B cell (primary cell): ENCODE measurements at regions of chr1 and their contacts with region 1.

Region 1: DNA sequence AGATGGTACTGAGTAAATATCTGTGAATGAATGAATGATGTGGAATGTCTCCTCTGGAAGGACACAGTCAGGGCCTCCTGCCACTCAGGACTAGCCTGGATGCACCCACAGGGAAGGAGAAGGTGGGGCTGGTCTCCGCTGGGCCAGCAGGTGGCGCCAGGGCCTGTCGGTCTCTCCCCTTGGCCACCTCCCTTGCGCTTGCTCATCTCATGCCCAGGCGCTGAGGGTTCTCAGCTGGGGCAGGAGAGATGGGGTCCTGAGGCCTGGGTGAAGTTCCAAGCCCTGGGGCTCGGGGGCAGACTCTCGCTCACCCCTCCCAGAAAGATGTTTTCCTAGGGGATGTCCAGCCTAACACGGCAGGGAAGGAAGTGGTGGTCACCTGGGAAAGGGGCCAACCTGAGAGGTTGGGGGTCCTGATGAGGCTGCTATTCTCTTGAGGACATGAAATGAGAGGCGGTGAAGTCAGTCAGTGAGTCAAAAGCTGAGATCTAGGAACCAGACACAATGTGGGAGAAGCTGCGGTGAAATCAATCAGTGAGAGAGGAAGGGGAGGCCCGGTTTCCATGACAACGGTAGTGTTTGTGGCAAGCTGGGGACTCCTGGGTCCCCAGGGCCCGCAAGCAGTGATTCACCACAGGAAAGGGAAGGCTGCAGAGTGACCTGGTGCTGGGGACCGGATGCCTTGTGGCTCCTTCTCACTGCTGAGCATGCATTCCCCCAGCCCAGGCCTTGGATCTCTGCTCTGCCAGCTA is 14.6 kb upstream of the MEX3A start:
- DNase-seq: peak; percentile 97
- ATAC-seq: peak; percentile 87
- H3K4me3 ChIP-seq: peak overlapping the region in 3 of 5 experiments; percentile 3 to 47 (median 30)
- H3K4me3 Mint-ChIP-seq: peak overlapping the region; percentile 72
- H3K27ac ChIP-seq: peak overlapping the region; percentile 82 to 93
- H3K27ac Mint-ChIP-seq: peak overlapping the region; percentile 95
- H3K4me1 ChIP-seq: peaks cover 23 to 24% of the 10 kb centered on the region in 2 donors
- H3K4me1 Mint-ChIP-seq: peaks cover 31% of the 10 kb centered on the region
- H3K27me3 ChIP-seq: peaks cover 0 to 1% (median 0%) of the 10 kb centered on the region in 4 experiments
- H3K27me3 Mint-ChIP-seq: no peaks in the 10 kb centered on the region
- CTCF ChIP-seq: peak; percentile 95

Region 2: DNA sequence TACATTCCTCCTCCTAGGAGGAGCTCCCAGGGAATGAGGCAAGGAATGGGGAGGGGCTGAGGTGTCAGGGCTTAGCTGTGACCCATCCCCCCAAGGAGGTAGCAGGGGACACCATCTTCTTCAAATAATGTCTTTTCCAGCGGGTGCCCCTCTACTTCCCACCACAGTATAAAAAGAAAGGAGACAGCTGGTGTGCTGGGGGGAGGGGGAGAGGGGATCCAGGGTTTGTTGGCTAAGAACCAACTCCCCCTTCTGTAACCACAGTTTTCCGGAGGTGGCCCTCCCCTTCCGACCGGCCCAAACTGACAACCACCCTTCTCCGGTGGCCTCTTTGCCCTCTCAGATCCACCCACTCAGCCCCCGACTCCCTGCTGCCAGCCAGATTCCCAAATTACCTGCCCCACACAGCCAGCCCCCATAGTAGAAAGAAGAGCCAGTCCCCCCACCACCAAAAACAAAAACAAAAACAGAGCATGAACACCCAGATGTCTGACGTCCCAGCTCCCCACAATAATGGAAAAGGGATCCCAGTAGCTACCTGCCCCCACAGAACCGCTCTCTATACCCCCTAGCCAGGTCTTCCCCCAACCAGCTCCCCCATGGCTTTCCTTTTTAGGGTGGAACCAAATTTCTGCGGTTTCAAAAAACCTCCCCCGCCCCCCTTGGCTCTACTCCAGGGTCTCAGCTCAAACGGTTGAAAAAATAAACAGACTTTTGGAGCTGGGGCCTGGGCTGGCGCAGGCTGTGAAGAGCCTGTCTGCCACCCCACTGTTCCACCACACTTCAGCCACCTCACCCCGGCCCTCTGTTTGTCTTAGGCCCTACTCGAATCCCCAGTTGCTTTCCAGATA is 120.5 kb before region 1 on chr1:
- CTCF ChIA-PET with region 1: no interaction called
- POLR2A ChIA-PET with region 1: no interaction called
- intact Hi-C with region 1: no loop called
- DNase-seq: peak; percentile 42
- ATAC-seq: no peak
- H3K4me3 ChIP-seq: peak overlapping the region; percentile 71 to 93 (median 81)
- H3K4me3 Mint-ChIP-seq: peak overlapping the region; percentile 95
- H3K27ac ChIP-seq: peak overlapping the region; percentile 70 to 91
- H3K27ac Mint-ChIP-seq: peak overlapping the region; percentile 94
- H3K4me1 ChIP-seq: peaks cover 62 to 72% of the 10 kb centered on the region in 2 donors
- H3K4me1 Mint-ChIP-seq: peaks cover 80% of the 10 kb centered on the region
- H3K27me3 ChIP-seq: no peaks in the 10 kb centered on the region
- H3K27me3 Mint-ChIP-seq: no peaks in the 10 kb centered on the region
- CTCF ChIP-seq: no peak

Region 3: GRCh38 chr1:156082309-156083091 is 14.3 kb before region 1 on chr1 and contains the start of gene MEX3A:
- CTCF ChIA-PET with region 1: interaction called, 12 read pairs
- POLR2A ChIA-PET with region 1: interaction called, 16 read pairs
- intact Hi-C with region 1: no loop called
- DNase-seq: peak; percentile 74
- ATAC-seq: peak; percentile 85
- H3K4me3 ChIP-seq: peak within 1 kb of the TSS; percentile 44 to 87 (median 81)
- H3K4me3 Mint-ChIP-seq: peak within 1 kb of the TSS; percentile 91
- H3K27ac ChIP-seq: peak within 1 kb of the TSS in 1 of 2 donors; percentile 26
- H3K27ac Mint-ChIP-seq: peak within 1 kb of the TSS; percentile 63
- H3K4me1 ChIP-seq: peaks cover 11 to 18% of the 10 kb centered on the region in 2 donors
- H3K4me1 Mint-ChIP-seq: peaks cover 22% of the 10 kb centered on the region
- H3K27me3 ChIP-seq: peaks cover 0 to 49% (median 21%) of the 10 kb centered on the region in 4 experiments
- H3K27me3 Mint-ChIP-seq: peaks cover 12% of the 10 kb centered on the region
- CTCF ChIP-seq: no peak
- total RNA-seq, gene MEX3A: 0.73 and 1.1 TPM in 2 replicates

Region 4: GRCh38 chr1:156114101-156114916 is 17.5 kb after region 1 on chr1 and contains the start of gene LMNA:
- CTCF ChIA-PET with region 1: interaction called, 970 read pairs
- POLR2A ChIA-PET with region 1: interaction called, 29 read pairs
- intact Hi-C with region 1: loop called (anchors 1 kb)
- DNase-seq: peak; percentile 80
- ATAC-seq: peak; percentile 79
- H3K4me3 ChIP-seq: peak within 1 kb of the TSS in 4 of 5 experiments; percentile 45 to 76 (median 64)
- H3K4me3 Mint-ChIP-seq: peak within 1 kb of the TSS; percentile 90
- H3K27ac ChIP-seq: peak within 1 kb of the TSS in 1 of 2 donors; percentile 64
- H3K27ac Mint-ChIP-seq: peak within 1 kb of the TSS; percentile 77
- H3K4me1 ChIP-seq: peaks cover 22 to 24% of the 10 kb centered on the region in 2 donors
- H3K4me1 Mint-ChIP-seq: peaks cover 30% of the 10 kb centered on the region
- H3K27me3 ChIP-seq: peaks cover 0 to 54% (median 12%) of the 10 kb centered on the region in 4 experiments
- H3K27me3 Mint-ChIP-seq: peaks cover 34% of the 10 kb centered on the region
- CTCF ChIP-seq: no peak
- total RNA-seq, gene LMNA: 28.7 and 32.3 TPM in 2 replicates

Region 5: GRCh38 chr1:156129706-156130581 is 33.1 kb after region 1 on chr1:
- CTCF ChIA-PET with region 1: interaction called, 970 read pairs
- POLR2A ChIA-PET with region 1: interaction called, 23 read pairs
- intact Hi-C with region 1: loop called (anchors 1 kb)
- DNase-seq: peak; percentile 84
- ATAC-seq: peak; percentile 69
- H3K4me3 ChIP-seq: no peak overlapping the region
- H3K4me3 Mint-ChIP-seq: no peak overlapping the region
- H3K27ac ChIP-seq: no peak overlapping the region
- H3K27ac Mint-ChIP-seq: peak overlapping the region; percentile 26
- H3K4me1 ChIP-seq: peaks cover 14 to 21% of the 10 kb centered on the region in 2 donors
- H3K4me1 Mint-ChIP-seq: peaks cover 28% of the 10 kb centered on the region
- H3K27me3 ChIP-seq: peaks cover 0 to 4% (median 1%) of the 10 kb centered on the region in 4 experiments
- H3K27me3 Mint-ChIP-seq: peaks cover 2% of the 10 kb centered on the region
- CTCF ChIP-seq: peak; percentile 95

Region 6: GRCh38 chr1:156146020-156146768 is 49.4 kb after region 1 on chr1:
- CTCF ChIA-PET with region 1: interaction called, 18 read pairs
- POLR2A ChIA-PET with region 1: no interaction called
- intact Hi-C with region 1: no loop called
- DNase-seq: peak; percentile 83
- ATAC-seq: peak; percentile 66
- H3K4me3 ChIP-seq: peak overlapping the region in 1 of 5 experiments; percentile 15
- H3K4me3 Mint-ChIP-seq: peak overlapping the region; percentile 62
- H3K27ac ChIP-seq: no peak overlapping the region
- H3K27ac Mint-ChIP-seq: peak overlapping the region; percentile 42
- H3K4me1 ChIP-seq: peaks cover 50 to 54% of the 10 kb centered on the region in 2 donors
- H3K4me1 Mint-ChIP-seq: peaks cover 48% of the 10 kb centered on the region
- H3K27me3 ChIP-seq: peaks cover 0 to 10% (median 5%) of the 10 kb centered on the region in 4 experiments
- H3K27me3 Mint-ChIP-seq: peaks cover 8% of the 10 kb centered on the region
- CTCF ChIP-seq: peak; percentile 75

Region 7: GRCh38 chr1:156319664-156320063 is 222.8 kb after region 1 on chr1:
- CTCF ChIA-PET with region 1: interaction called, 11 read pairs
- POLR2A ChIA-PET with region 1: no interaction called
- intact Hi-C with region 1: no loop called
- DNase-seq: peak; percentile 47
- ATAC-seq: no peak
- H3K4me3 ChIP-seq: no peak overlapping the region
- H3K4me3 Mint-ChIP-seq: no peak overlapping the region
- H3K27ac ChIP-seq: no peak overlapping the region
- H3K27ac Mint-ChIP-seq: no peak overlapping the region
- H3K4me1 ChIP-seq: no peaks in the 10 kb centered on the region
- H3K4me1 Mint-ChIP-seq: no peaks in the 10 kb centered on the region
- H3K27me3 ChIP-seq: no peaks in the 10 kb centered on the region
- H3K27me3 Mint-ChIP-seq: no peaks in the 10 kb centered on the region
- CTCF ChIP-seq: peak; percentile 73